Psoas muscle (tissue), 8 donors: ENCODE measurements at regions of chr13 and their contacts with region 1.

Region 1: DNA sequence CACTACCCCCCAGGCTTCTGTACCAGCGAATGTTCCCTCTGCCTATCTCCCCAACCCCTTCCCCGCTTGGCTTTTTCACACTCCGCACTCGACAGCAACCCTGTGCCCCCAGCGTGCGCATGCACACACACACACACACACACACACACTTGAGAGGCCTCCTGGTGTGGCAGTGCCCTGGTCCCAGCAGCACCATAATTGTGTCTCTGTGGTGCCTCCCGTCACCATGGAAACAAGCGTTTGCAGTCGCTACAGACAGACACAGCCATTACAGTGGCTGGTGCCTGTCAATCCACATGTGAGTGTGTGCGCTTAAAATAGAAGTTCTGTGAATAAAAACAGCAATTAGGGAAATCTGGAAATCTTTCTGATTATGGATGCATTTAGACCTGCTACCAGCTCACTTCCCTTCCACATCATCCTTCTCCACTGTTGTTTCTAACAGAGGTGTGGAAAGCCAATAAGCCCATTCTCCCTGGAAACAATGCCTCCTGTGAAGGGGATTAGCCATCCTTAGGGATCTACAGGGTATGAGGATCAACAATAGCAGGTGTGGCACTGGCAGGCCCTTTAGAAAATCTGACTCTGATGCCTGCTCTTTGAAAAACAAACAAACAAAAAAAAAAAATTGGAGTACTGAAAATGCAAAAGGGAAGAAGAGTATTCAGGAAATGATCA is 146.3 kb downstream of the DCLK1 start:
- DNase-seq: no peak
- ATAC-seq: no peak
- H3K4me3 ChIP-seq: no peak overlapping the region
- H3K27ac ChIP-seq: no peak overlapping the region
- H3K4me1 ChIP-seq: no peaks in the 10 kb centered on the region
- H3K27me3 ChIP-seq: no peaks in the 10 kb centered on the region
- CTCF ChIP-seq: no peak

Region 2: DNA sequence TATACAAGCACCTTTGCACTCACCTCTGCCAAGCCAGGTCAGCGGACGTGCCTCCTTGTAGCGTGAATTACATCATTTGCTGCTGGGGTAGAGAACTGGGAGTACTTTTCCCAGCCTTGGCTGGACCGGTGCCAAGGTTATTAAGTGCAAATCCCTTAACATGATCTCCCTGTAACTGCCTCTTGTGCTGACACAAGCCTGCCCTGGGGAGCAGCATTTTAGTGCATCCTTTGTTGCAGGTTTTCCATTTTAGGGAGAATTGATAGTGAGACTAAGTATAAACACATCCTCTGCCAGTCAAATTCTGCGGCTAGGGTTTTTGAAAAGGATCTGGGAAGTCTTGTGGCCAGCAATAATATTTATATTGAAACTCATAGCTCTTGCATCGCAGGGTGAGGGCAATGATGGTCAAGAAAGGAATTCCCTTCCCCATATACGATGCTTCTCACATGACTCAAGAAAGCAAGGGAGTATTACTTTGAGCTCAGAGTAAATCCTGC is 178.9 kb after region 1 on chr13:
- intact Hi-C with region 1: loop called in 1 of 2 experiments (anchors 10 kb)
- DNase-seq: peak; percentile 51 to 76
- ATAC-seq: peak; percentile 34 to 92 (median 73)
- H3K4me3 ChIP-seq: no peak overlapping the region
- H3K27ac ChIP-seq: no peak overlapping the region
- H3K4me1 ChIP-seq: no peaks in the 10 kb centered on the region
- H3K27me3 ChIP-seq: no peaks in the 10 kb centered on the region
- CTCF ChIP-seq: no peak